PC-9 (cell line): ENCODE measurements at regions of chr22 and their contacts with region 1.

Region 1: GRCh38 chr22:18077639-18078328 is at the start of gene PEX26:
- DNase-seq: peak; percentile 85
- H3K4me3 ChIP-seq: peak within 1 kb of the TSS; percentile 98
- H3K27ac ChIP-seq: peak within 1 kb of the TSS; percentile 56
- H3K4me1 ChIP-seq: peaks cover 16% of the 10 kb centered on the region
- H3K27me3 ChIP-seq: no peaks in the 10 kb centered on the region
- CTCF ChIP-seq: no peak
- total RNA-seq, gene PEX26: 30.0 and 36.2 TPM in 2 replicates

Region 2: DNA sequence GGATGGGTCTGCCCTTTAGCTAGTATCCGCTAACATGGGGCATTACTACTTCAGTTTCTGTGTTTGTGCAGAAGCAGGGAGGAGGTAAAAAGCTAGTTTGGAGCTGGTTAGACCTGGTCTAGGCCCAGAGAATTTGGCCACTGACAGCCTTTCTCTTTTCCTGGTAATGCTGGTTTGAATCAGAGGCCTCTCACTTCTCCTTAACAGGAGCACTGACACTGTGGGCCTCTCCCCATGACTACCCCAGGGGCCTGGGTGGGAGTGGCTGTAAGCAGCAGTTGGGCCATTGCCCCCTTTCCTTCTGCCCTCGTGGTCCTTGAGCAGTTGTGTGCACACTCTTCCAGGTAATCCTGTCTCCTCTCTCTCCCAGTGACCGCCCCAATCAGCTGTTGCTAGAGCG is 523.0 kb before region 1 on chr22:
- CTCF ChIA-PET with region 1: interaction called, 3 read pairs
- POLR2A ChIA-PET with region 1: no interaction called
- intact Hi-C with region 1: loop called (anchors 5 kb)
- DNase-seq: no peak
- H3K4me3 ChIP-seq: no peak overlapping the region
- H3K27ac ChIP-seq: no peak overlapping the region
- H3K4me1 ChIP-seq: no peaks in the 10 kb centered on the region
- H3K27me3 ChIP-seq: no peaks in the 10 kb centered on the region
- CTCF ChIP-seq: no peak

Region 3: DNA sequence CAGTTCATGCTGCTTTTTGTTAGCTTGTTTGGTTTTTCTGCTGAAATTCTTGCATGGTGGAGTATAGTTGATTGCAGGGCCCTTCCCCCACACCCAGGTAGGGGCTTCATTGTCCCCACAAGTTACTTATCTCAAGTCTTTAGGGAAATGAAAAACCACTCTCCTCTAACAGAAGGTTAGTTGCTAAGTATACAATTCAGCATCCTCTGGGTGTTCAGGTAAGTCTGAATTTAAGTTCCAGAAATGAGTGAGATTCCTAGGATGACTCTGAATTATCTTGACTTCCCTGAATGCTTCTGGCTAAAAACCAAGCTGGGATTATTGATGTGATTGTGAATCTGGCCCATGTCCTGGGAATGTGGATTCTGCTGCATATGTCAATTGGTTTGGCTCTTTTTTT is 398.9 kb before region 1 on chr22:
- CTCF ChIA-PET with region 1: no interaction called
- POLR2A ChIA-PET with region 1: no interaction called
- intact Hi-C with region 1: no loop called
- DNase-seq: no peak
- H3K4me3 ChIP-seq: no peak overlapping the region
- H3K27ac ChIP-seq: no peak overlapping the region
- H3K4me1 ChIP-seq: no peaks in the 10 kb centered on the region
- H3K27me3 ChIP-seq: no peaks in the 10 kb centered on the region
- CTCF ChIP-seq: no peak

Region 4: GRCh38 chr22:17742527-17742902 is 335.3 kb before region 1 on chr22:
- CTCF ChIA-PET with region 1: no interaction called
- POLR2A ChIA-PET with region 1: no interaction called
- intact Hi-C with region 1: loop called (anchors 2 kb)
- DNase-seq: peak; percentile 48 to 54
- H3K4me3 ChIP-seq: no peak overlapping the region
- H3K27ac ChIP-seq: no peak overlapping the region
- H3K4me1 ChIP-seq: no peaks in the 10 kb centered on the region
- H3K27me3 ChIP-seq: no peaks in the 10 kb centered on the region
- CTCF ChIP-seq: peak; percentile 74

Region 5: DNA sequence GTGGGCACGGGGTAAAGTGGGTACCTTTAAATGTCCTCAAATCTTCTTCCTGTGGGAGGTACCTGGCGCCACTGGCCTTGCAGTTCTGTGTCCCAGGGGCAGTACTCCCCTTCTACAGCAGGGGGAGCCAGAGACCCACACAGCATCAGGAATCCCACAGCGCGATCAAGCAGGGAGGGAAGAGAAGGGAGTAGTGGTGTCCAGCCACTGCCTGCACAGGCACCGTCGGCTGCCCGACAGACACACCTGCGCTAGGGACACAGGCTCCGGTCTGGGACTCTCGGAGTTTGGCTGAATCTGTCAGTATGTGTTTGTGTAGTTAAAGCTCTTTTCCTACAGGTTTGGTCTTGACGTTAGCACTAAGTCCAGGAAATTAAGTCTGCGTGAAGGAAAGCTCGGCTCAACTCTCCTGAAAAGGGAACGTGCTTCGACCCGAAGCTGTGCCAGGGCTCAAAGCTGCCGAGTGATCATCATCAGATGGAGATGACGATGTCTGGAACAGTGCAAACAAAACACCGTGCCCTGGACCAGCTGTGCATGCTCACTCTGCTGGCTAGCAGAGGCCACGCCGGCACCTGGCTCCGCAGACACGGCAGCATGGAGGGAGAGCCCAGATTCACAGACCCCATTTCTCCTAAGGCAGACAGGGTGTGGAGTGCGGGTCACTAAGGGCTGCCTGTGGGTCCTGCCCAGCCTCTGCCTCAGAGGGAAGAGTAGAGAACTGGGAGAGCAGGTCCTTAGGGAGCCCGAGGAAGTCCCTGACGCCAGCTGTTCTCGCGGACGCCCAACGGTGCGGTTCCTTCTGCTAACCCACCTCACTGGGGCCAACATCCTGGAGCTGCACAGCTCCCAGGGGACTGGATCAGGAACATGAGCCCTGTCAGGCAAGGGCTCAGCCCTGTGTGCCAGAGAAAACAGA is 247.5 kb before region 1 on chr22:
- CTCF ChIA-PET with region 1: interaction called, 17 read pairs
- POLR2A ChIA-PET with region 1: interaction called, 3 read pairs
- intact Hi-C with region 1: loop called (anchors 1 kb)
- DNase-seq: peak; percentile 50 to 81
- H3K4me3 ChIP-seq: no peak overlapping the region
- H3K27ac ChIP-seq: no peak overlapping the region
- H3K4me1 ChIP-seq: no peaks in the 10 kb centered on the region
- H3K27me3 ChIP-seq: no peaks in the 10 kb centered on the region
- CTCF ChIP-seq: peak; percentile 91

Region 6: GRCh38 chr22:17867160-17867785 is 210.5 kb before region 1 on chr22:
- CTCF ChIA-PET with region 1: no interaction called
- POLR2A ChIA-PET with region 1: no interaction called
- intact Hi-C with region 1: no loop called
- DNase-seq: no peak
- H3K4me3 ChIP-seq: no peak overlapping the region
- H3K27ac ChIP-seq: no peak overlapping the region
- H3K4me1 ChIP-seq: no peaks in the 10 kb centered on the region
- H3K27me3 ChIP-seq: no peaks in the 10 kb centered on the region
- CTCF ChIP-seq: no peak

Region 7: GRCh38 chr22:17988800-17989513 is 88.8 kb before region 1 on chr22:
- CTCF ChIA-PET with region 1: no interaction called
- POLR2A ChIA-PET with region 1: no interaction called
- intact Hi-C with region 1: loop called (anchors 5 kb)
- DNase-seq: no peak
- H3K4me3 ChIP-seq: no peak overlapping the region
- H3K27ac ChIP-seq: no peak overlapping the region
- H3K4me1 ChIP-seq: no peaks in the 10 kb centered on the region; the same call in 1 of the 2 replicates
- H3K27me3 ChIP-seq: no peaks in the 10 kb centered on the region
- CTCF ChIP-seq: no peak

Region 8: DNA sequence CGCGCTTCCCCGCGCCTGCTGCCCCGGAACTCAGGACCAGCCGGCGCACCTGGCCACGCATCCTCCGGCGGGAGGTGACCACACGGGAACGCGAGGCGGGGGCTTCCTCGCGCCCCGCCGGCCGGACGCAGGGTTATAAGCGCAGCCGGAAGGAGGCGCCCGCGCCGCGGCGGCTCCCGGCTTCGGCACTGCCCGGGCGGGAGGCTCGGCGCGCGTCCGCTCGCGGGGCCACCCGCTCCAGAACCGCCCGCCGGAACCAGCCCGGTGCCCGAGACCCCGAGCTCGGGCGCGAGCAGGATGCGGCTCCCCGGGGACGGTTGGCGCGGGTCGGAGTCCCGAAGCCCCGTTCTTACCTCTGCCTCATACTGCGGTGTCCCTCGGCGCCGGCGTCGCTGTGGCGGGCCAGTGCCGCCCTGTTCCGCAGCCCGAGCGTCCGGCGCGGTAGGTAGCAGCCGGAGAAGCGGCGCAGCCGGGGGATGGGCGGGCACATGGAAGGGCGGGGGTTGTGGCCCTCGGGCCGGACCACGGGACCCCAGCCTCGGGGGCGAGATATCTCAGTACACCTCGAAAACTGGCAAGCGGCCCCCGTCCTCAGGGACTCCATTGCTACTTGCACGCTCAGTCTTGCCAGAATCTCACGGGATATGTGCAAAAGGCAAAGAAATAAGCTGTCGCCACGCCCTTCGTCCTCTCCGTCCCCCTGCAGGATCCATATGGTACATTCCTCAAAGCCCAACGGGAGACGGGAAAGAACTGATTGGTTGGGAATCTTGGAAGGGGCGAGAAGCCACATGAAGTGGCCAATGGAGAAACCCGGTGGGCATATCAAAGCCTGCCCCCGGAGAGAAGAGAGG is 76.5 kb before region 1 on chr22:
- CTCF ChIA-PET with region 1: interaction called, 4 read pairs
- POLR2A ChIA-PET with region 1: no interaction called
- intact Hi-C with region 1: loop called (anchors 1 kb)
- DNase-seq: peak; percentile 80 to 88
- H3K4me3 ChIP-seq: peak overlapping the region; percentile 68
- H3K27ac ChIP-seq: peak overlapping the region; percentile 75
- H3K4me1 ChIP-seq: peaks cover 16% of the 10 kb centered on the region
- H3K27me3 ChIP-seq: no peaks in the 10 kb centered on the region
- CTCF ChIP-seq: peak; percentile 42

Region 9: GRCh38 chr22:18024276-18024947 is 53.4 kb before region 1 on chr22 and contains the start of gene MICAL3:
- CTCF ChIA-PET with region 1: no interaction called
- POLR2A ChIA-PET with region 1: no interaction called
- intact Hi-C with region 1: loop called (anchors 1 kb)
- DNase-seq: peak in 1 of 2 experiments; percentile 58
- H3K4me3 ChIP-seq: peak within 1 kb of the TSS; percentile 71
- H3K27ac ChIP-seq: no peak within 1 kb of the TSS
- H3K4me1 ChIP-seq: peaks cover 5% of the 10 kb centered on the region; the same call in 1 of the 2 replicates
- H3K27me3 ChIP-seq: no peaks in the 10 kb centered on the region
- CTCF ChIP-seq: peak; percentile 38; the same call in 1 of the 2 replicates
- total RNA-seq, gene MICAL3: 23.8 and 27.4 TPM in 2 replicates

Region 10: DNA sequence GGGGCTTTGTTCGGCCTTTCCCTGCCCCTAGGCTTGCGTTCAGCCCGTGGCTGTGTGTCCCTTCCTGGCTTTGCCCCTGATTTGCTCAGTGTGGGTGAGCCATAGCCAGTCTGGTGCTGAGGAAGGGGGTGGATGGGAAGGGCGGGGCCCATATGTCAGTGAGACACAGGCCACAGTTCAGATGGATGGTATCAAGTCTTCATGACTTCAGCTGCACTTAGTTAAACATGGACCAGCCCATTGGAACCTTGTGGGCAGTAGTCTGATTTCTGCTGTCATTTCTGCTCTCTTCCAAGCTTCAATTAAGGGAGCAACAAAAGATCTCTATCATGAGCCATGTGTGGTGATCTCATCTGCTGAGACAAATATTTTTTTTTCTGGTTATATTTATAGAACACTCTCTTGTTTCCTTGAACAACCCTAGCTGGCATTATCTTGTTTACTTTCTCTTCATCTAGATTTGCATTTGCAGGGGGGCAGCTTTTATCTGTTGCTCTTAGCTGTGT is 21.6 kb before region 1 on chr22:
- CTCF ChIA-PET with region 1: no interaction called
- POLR2A ChIA-PET with region 1: no interaction called
- intact Hi-C with region 1: no loop called
- DNase-seq: no peak
- H3K4me3 ChIP-seq: no peak overlapping the region
- H3K27ac ChIP-seq: no peak overlapping the region
- H3K4me1 ChIP-seq: peaks cover 16% of the 10 kb centered on the region
- H3K27me3 ChIP-seq: no peaks in the 10 kb centered on the region
- CTCF ChIP-seq: no peak

Region 11: GRCh38 chr22:18121950-18122544 is 44.3 kb after region 1 on chr22:
- CTCF ChIA-PET with region 1: no interaction called
- POLR2A ChIA-PET with region 1: no interaction called
- intact Hi-C with region 1: no loop called
- DNase-seq: no peak
- H3K4me3 ChIP-seq: no peak overlapping the region
- H3K27ac ChIP-seq: no peak overlapping the region
- H3K4me1 ChIP-seq: no peaks in the 10 kb centered on the region
- H3K27me3 ChIP-seq: no peaks in the 10 kb centered on the region
- CTCF ChIP-seq: no peak